Mammary epithelial cell (primary cell): ENCODE measurements at regions of chr17 and their contacts with region 1.

Region 1: DNA sequence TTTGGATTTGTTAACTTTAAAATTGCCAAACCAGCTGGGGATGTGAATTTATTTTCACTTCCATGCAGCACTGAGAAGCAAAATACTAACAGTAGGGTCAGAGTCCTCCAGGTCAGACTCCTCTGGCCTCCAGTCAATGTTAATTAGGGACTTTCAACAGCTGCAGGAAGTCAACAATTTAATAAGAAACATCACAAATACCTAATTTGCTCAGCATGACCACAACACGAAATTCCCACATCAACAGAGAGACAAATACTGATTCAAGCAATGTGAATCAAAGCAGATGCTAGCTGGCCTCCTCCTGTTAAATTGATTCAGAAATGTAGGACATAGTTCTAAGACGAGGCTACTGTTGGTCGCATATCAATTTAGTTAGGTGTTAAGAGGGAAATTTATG is 111.7 kb downstream of the ABCA8 start:
- DNase-seq: no peak
- H3K4me3 ChIP-seq: no peak overlapping the region
- H3K27ac ChIP-seq: no peak overlapping the region
- H3K4me1 ChIP-seq: no peaks in the 10 kb centered on the region
- H3K27me3 ChIP-seq: peaks cover 5% of the 10 kb centered on the region
- CTCF ChIP-seq: no peak

Region 2: GRCh38 chr17:68897557-68897956 is 54.0 kb after region 1 on chr17:
- CTCF ChIA-PET with region 1: no interaction called
- dilution Hi-C with region 1: loop called (anchors 5 kb)
- in situ Hi-C with region 1: no loop called
- intact Hi-C with region 1: no loop called
- DNase-seq: no peak
- H3K4me3 ChIP-seq: no peak overlapping the region
- H3K27ac ChIP-seq: no peak overlapping the region
- H3K4me1 ChIP-seq: no peaks in the 10 kb centered on the region
- H3K27me3 ChIP-seq: no peaks in the 10 kb centered on the region
- CTCF ChIP-seq: no peak

Region 3: GRCh38 chr17:68954863-68955841 is 111.6 kb after region 1 on chr17 and contains the start of gene ABCA8:
- CTCF ChIA-PET with region 1: no interaction called
- dilution Hi-C with region 1: no loop called
- in situ Hi-C with region 1: no loop called
- intact Hi-C with region 1: no loop called
- DNase-seq: no peak
- H3K4me3 ChIP-seq: no peak within 1 kb of the TSS
- H3K27ac ChIP-seq: no peak within 1 kb of the TSS
- H3K4me1 ChIP-seq: no peaks in the 10 kb centered on the region
- H3K27me3 ChIP-seq: no peaks in the 10 kb centered on the region
- CTCF ChIP-seq: no peak
- total RNA-seq, gene ABCA8: under 0.01 TPM in 1 of 2 donors, not detected in the other